Endothelial cell of umbilical vein (primary cell): ENCODE measurements at regions of chr2 and their contacts with region 1.

Region 1: GRCh38 chr2:166256896-166257295 is 118.8 kb downstream of the SCN9A start:
- DNase-seq: no peak
- H3K4me3 ChIP-seq: no peak overlapping the region
- H3K27ac ChIP-seq: no peak overlapping the region
- H3K4me1 ChIP-seq: no peaks in the 10 kb centered on the region
- H3K27me3 ChIP-seq: no peaks in the 10 kb centered on the region
- CTCF ChIP-seq: no peak
- POLR2A ChIP-seq: no peak

Region 2: DNA sequence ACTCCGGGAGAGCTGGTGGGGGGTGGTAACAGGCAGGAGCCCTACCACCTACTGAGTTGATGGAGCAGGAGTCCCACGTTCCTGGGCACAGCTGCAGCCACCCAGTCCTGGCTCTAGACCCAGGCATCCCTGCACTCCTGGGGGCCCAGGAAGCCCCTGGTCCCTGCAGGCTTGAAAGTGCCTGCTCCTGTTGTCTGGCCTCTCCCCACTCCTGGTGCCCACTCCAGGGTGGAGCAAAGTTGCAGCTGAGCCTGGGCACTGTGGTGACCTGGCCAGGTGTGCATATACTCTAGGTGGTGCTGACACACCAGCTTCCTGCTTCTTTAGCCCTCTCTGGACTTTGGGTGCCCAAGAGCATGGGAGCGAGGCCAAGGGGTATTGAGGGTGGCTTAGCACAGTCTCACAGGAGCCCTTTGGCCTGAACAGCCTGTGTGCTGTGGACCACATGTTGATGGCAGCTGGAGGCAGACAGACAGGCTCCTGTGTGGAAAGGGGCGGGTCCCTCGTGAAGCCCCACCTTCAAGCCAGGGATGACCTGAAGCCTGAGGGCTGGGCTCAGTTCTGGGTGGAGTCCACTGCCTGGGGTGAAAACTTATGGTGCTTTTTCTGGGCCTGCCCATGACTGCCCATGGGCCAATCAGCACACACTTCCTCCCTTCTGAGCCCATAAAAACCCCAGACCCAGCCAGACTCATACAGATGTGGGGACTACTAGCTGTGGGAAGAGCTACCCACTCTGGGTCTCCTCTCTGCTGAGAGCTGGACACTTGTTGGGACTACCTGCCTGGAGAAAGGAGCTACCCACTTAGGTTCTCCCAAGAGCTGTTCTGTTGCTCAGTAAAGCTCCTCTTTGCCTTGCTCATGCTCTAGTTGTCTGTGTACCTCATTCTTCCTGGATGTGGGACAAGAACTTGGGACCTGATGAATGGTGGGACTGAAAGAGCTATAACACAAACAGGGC is 1182.3 kb before region 1 on chr2:
- CTCF ChIA-PET with region 1: no interaction called
- POLR2A ChIA-PET with region 1: no interaction called
- dilution Hi-C with region 1: no loop called
- intact Hi-C with region 1: no loop called
- DNase-seq: no peak
- H3K4me3 ChIP-seq: no peak overlapping the region
- H3K27ac ChIP-seq: no peak overlapping the region
- H3K4me1 ChIP-seq: no peaks in the 10 kb centered on the region
- H3K27me3 ChIP-seq: no peaks in the 10 kb centered on the region
- CTCF ChIP-seq: no peak
- POLR2A ChIP-seq: no peak

Region 3: DNA sequence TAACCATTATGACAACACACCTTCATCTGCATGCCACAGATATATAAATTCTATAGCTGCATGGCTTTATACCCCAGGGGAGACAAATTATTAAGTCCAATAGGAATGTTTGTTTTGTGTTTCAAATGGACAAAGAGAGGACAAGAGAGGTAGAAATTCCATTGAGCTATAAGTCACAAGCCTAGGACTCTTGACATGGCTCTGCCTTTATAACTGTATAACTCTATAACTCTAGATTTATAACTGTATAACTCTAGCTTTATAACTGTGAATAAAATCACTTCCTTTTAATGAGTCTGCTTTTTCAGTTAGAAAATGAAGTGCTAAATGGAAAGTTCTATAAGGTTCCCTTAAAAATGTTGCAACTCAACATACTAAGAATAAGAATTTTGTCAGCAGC is 12.4 kb after region 1 on chr2:
- CTCF ChIA-PET with region 1: interaction called, 13 read pairs
- POLR2A ChIA-PET with region 1: no interaction called
- dilution Hi-C with region 1: no loop called
- intact Hi-C with region 1: no loop called
- DNase-seq: no peak
- H3K4me3 ChIP-seq: no peak overlapping the region
- H3K27ac ChIP-seq: no peak overlapping the region
- H3K4me1 ChIP-seq: no peaks in the 10 kb centered on the region
- H3K27me3 ChIP-seq: no peaks in the 10 kb centered on the region
- CTCF ChIP-seq: no peak
- POLR2A ChIP-seq: no peak